Heart right ventricle (tissue), 16 donors: ENCODE measurements at regions of chr9 and their contacts with region 1.

Region 1: GRCh38 chr9:113844466-113844865 is 31.6 kb upstream of the ZNF618 start:
- DNase-seq: no peak
- ATAC-seq: no peak
- H3K4me3 ChIP-seq: no peak overlapping the region
- H3K27ac ChIP-seq: no peak overlapping the region
- H3K4me1 ChIP-seq: no peaks in the 10 kb centered on the region
- H3K27me3 ChIP-seq: peaks cover 0 to 4% (median 0%) of the 10 kb centered on the region in 7 donors
- CTCF ChIP-seq: no peak

Region 2: DNA sequence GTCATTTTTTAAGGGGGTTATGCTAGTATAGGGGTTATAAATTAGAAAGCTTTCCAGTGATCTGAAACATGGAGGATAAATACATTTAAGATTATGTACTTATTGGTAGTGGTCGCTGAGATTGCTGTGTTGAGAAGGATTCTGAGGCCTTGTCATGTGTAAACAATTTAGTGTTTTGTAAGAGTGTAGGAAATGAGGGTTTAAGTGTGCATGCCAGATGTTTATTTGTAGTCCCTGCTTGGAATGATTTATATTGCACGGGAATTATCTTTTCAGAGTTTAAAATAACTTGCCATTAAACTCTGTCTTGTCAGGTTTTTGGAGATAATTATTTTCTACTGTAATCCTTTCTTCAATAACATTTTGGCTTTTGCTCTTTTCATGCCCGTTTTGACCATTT is 51.1 kb after region 1 on chr9:
- intact Hi-C with region 1: loop called in 1 of 10 experiments (anchors 2 kb)
- DNase-seq: no peak
- ATAC-seq: no peak
- H3K4me3 ChIP-seq: no peak overlapping the region
- H3K27ac ChIP-seq: no peak overlapping the region
- H3K4me1 ChIP-seq: peaks cover 0 to 7% (median 0%) of the 10 kb centered on the region in 9 donors
- H3K27me3 ChIP-seq: no peaks in the 10 kb centered on the region
- CTCF ChIP-seq: no peak

Region 3: GRCh38 chr9:114047717-114048116 is 203.3 kb after region 1 on chr9:
- intact Hi-C with region 1: no loop called
- DNase-seq: no peak
- ATAC-seq: no peak
- H3K4me3 ChIP-seq: no peak overlapping the region
- H3K27ac ChIP-seq: no peak overlapping the region
- H3K4me1 ChIP-seq: no peaks in the 10 kb centered on the region
- H3K27me3 ChIP-seq: no peaks in the 10 kb centered on the region
- CTCF ChIP-seq: peak in 4 of 9 donors; percentile 5 to 26 (median 16)